ENCODE measurements at regions of chr12 and their contacts with region 1.

Region 1: GRCh38 chr12:15772405-15773018 is 16.7 kb downstream of the EPS8 start:
- DNase-seq: no peak
- H3K4me3 Mint-ChIP-seq: no peak overlapping the region
- H3K27ac Mint-ChIP-seq: no peak overlapping the region
- H3K4me1 Mint-ChIP-seq: no peaks in the 10 kb centered on the region
- H3K27me3 Mint-ChIP-seq: peaks cover 4% of the 10 kb centered on the region

Region 2: GRCh38 chr12:15590180-15590826 is 182.2 kb before region 1 on chr12:
- CTCF ChIA-PET with region 1: no interaction called
- POLR2A ChIA-PET with region 1: no interaction called
- intact Hi-C with region 1: loop called (anchors 1 kb)
- DNase-seq: peak; percentile 56
- H3K4me3 Mint-ChIP-seq: peak overlapping the region; percentile 70
- H3K27ac Mint-ChIP-seq: peak overlapping the region; percentile 21
- H3K4me1 Mint-ChIP-seq: peaks cover 8% of the 10 kb centered on the region
- H3K27me3 Mint-ChIP-seq: no peaks in the 10 kb centered on the region

Region 3: GRCh38 chr12:15712823-15713660 is 59.5 kb before region 1 on chr12:
- CTCF ChIA-PET with region 1: interaction called, 3 read pairs
- POLR2A ChIA-PET with region 1: no interaction called
- intact Hi-C with region 1: loop called (anchors 5 kb)
- DNase-seq: no peak
- H3K4me3 Mint-ChIP-seq: no peak overlapping the region
- H3K27ac Mint-ChIP-seq: no peak overlapping the region
- H3K4me1 Mint-ChIP-seq: peaks cover 8% of the 10 kb centered on the region
- H3K27me3 Mint-ChIP-seq: peaks cover 1% of the 10 kb centered on the region

Region 4: DNA sequence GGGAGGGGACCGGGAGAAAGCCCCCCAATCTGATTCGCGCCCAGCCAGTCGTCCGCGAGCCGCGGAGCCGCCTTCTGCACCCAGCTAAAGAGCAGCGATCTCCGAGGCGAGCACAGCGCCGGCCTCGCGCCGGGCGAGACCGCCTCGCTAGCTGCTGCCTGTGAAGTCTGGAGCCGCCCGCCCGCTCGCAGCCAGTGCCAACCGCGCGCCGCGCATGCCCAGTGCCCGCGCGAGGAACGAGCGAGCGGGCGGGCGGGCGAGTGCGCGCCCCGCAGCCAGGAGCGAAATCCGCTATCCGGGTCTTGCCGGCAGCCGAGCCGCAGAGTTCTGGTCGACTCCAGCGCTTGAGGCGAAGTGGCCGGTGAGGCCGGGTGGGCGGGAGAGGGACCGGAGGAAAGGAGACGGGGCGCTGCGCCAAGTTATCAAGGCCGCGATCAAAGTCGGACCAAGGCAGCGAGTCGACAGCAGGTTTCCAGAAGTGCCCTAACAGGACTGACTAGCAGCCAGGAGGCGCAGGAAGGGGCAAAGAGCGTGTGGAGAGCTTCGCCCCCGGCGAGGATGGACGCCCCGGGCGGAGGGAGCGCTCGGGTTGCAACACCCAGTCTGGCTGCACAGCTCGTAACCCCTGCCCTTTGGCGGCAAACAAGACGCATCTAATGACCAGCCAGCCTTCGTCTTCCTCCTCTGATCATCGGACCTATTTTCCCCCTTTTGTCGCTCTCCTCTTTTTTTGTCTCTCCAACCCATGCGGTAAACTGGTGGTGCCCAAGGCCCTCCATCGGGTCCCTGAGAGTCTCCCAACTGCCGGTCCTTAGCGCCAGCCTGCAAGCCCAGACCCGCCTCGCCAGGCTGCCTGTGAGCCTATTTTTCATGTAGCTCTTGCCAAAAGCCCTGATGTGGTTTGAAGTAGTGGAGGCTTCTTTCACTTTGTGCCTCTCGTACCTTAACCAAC is 17.0 kb after region 1 on chr12 and contains the start of gene EPS8:
- CTCF ChIA-PET with region 1: no interaction called
- POLR2A ChIA-PET with region 1: no interaction called
- intact Hi-C with region 1: loop called (anchors 2 kb)
- DNase-seq: peak; percentile 91
- H3K4me3 Mint-ChIP-seq: peak within 1 kb of the TSS; percentile 79
- H3K27ac Mint-ChIP-seq: peak within 1 kb of the TSS; percentile 15
- H3K4me1 Mint-ChIP-seq: peaks cover 14% of the 10 kb centered on the region
- H3K27me3 Mint-ChIP-seq: peaks cover 33% of the 10 kb centered on the region
- total RNA-seq, gene EPS8: 3.2 to 3.5 TPM

Region 5: GRCh38 chr12:15856097-15856982 is 83.8 kb after region 1 on chr12:
- CTCF ChIA-PET with region 1: interaction called, 3 read pairs
- POLR2A ChIA-PET with region 1: no interaction called
- intact Hi-C with region 1: loop called (anchors 1 kb)
- DNase-seq: peak; percentile 22
- H3K4me3 Mint-ChIP-seq: no peak overlapping the region
- H3K27ac Mint-ChIP-seq: no peak overlapping the region
- H3K4me1 Mint-ChIP-seq: no peaks in the 10 kb centered on the region
- H3K27me3 Mint-ChIP-seq: peaks cover 5% of the 10 kb centered on the region

Measured in activated CD4-positive, alpha-beta memory T cell treated with anti-CD3 and anti-CD28 coated beads for 36 hours (primary cell).